ENCODE measurements at regions of chr16 and their contacts with region 1.

Region 1: DNA sequence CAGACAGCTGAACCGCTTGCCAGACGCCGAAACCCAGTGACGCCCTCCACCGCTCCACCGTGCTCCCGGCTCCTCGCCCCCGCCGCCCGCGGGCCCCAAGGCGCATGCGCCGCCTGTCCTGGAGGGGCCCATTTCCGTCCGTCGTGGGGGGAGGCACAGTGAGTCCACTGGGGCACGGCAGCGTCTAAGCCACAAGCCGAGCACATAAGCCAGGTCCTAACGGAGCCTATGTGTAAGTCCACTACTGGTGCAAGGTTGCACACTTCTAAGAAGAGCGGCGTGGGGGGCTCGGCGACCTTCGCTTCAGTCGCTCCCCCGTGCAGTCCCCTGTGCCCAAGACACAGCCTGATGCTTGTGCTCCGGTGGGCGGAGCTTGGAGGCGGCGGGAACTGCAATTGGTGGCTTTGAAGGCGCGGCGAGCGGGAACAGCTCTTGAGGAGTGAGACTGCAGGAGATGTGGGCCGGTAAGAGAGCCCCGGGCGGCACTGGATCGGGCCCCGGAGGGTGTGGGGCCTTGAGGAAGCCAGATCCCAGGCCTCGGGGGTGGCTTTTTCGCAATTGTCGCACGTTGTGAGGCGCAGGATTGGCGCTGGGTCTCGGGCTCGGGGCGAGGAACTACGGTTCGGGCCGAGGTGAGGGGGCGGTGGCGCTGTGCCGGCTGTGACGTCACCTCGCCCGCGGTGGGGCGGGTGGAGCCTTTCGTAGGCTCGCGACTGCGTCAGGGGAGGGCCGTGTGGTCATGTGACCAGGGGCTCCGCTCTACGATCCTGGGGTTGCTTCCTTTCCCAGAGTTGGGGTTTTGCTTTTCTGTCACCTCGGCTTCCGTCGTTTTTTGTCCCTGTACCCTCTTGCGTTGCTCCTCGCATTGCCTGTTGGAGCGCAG is at the starts of genes CENPN and CMC2:
- DNase-seq: peak; percentile 94
- CTCF ChIP-seq: no peak

Region 2: DNA sequence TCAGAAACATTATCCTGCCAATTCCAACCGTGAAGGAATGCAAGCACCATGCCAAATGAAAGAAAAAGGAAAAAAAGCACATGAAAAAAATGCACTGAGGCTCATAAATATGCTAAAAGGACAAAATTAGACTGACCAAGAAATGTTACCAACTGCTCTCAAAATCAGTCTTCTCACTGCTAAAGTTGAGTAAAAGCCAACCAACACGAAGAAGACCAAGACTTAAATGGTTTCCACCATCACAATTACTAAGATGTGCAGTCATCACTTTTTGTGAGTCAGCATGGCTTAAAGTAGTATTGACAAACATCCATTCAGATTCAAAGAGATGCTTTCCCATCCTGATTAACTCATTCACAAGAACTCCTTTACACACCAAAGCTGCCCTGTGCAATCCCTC is 219.0 kb before region 1 on chr16:
- CTCF ChIA-PET with region 1: no interaction called
- POLR2A ChIA-PET with region 1: no interaction called
- DNase-seq: no peak
- CTCF ChIP-seq: no peak

Region 3: GRCh38 chr16:80909720-80910119 is 97.3 kb before region 1 on chr16:
- CTCF ChIA-PET with region 1: no interaction called
- POLR2A ChIA-PET with region 1: no interaction called
- DNase-seq: no peak
- CTCF ChIP-seq: no peak

Region 4: GRCh38 chr16:80986557-80986956 is 20.5 kb before region 1 on chr16:
- CTCF ChIA-PET with region 1: interaction called, 10 read pairs
- POLR2A ChIA-PET with region 1: interaction called, 3 read pairs
- DNase-seq: no peak
- CTCF ChIP-seq: no peak

Region 5: DNA sequence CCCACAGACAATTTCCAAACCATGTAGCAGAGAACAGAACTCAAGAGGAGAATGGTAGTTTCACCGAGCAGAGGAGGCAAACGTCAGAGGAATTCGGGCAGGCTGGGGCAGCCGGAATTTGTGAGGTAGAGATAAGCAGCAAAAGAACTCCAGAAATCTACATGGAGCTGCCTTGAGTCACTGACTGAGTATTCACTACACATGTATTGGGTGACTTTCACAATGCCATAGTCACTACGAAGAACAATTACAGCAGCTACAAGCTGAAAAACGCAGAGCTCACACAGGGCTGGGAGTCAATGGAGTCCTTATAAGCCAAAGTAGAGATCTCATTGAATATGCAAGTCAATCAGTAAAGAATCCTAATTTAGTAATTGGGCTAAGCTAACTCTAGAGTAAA is 13.7 kb before region 1 on chr16:
- CTCF ChIA-PET with region 1: interaction called, 27 read pairs
- POLR2A ChIA-PET with region 1: interaction called, 3 read pairs
- DNase-seq: no peak
- CTCF ChIP-seq: no peak

Region 6: DNA sequence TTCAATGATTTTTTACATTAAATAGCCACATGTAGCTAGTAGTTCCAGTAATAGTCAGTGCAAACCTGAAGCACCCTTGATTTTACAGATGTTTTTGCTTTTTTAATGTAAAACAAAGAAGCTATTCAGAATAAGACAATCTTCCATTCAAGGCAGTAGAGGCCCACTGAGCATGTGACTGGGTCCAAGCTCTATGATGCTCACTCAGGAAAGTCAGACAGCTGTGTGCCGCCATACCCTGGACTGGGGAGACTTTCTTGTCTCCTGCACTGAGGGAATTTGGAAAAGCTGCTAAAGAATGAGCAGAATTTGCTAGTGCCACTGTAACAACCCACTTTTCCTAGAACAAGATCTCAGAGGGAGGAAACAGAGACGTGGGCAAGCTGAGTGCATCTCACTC is 11.4 kb after region 1 on chr16:
- CTCF ChIA-PET with region 1: interaction called, 11 read pairs
- POLR2A ChIA-PET with region 1: no interaction called
- DNase-seq: no peak
- CTCF ChIP-seq: no peak